ENCODE measurements at regions of chr5 and their contacts with region 1.

Region 1: GRCh38 chr5:59099270-59099994 is 516.6 kb downstream of the RAB3C start:
- DNase-seq: peak; percentile 69
- H3K4me3 Mint-ChIP-seq: peak overlapping the region; percentile 50
- H3K27ac Mint-ChIP-seq: peak overlapping the region; percentile 90
- H3K4me1 Mint-ChIP-seq: peaks cover 82% of the 10 kb centered on the region
- H3K27me3 Mint-ChIP-seq: no peaks in the 10 kb centered on the region

Region 2: DNA sequence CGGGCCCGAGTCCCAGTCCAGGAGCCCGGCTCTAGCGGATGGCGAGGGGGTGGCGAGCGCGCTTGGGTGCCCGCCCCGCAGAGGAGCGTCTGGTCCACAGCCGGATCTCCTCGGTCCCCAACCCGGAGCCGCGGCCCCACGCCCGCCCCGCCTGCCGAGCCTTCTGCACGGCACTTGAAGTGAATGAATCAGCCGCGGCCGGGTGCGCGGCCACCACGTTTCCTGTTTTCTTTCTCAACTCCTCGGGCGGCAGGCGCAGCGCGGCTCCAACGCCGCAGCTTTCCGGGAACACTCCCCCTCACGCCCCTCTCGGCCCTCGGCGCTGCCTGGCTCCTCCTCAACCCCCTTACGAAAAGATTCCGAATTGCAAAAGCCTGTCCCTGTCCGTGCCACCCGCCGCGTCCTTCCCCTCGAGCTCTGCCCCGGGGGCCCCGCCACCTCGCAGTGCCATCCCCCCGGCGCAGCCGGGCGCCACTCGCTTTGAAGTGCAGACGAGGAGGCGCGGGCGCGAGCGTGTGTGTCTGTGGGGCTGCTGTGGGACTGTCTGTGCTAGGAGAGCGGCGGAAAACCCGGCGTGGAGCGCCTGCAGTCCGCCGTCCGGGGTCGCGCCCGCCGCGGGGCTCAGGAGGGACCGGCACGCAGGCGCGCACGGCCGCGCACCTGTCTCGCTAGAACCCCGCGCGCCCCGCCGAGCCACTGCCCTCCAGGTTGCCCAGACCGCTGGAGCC is 60.0 kb before region 1 on chr5:
- intact Hi-C with region 1: loop called (anchors 1 kb)
- DNase-seq: peak; percentile 88
- H3K4me3 Mint-ChIP-seq: peak overlapping the region; percentile 89
- H3K27ac Mint-ChIP-seq: peak overlapping the region; percentile 99
- H3K4me1 Mint-ChIP-seq: peaks cover 56% of the 10 kb centered on the region
- H3K27me3 Mint-ChIP-seq: no peaks in the 10 kb centered on the region

Region 3: GRCh38 chr5:59152701-59153245 is 53.3 kb after region 1 on chr5:
- intact Hi-C with region 1: loop called (anchors 1 kb)
- DNase-seq: peak; percentile 14
- H3K4me3 Mint-ChIP-seq: peak overlapping the region; percentile 58
- H3K27ac Mint-ChIP-seq: no peak overlapping the region
- H3K4me1 Mint-ChIP-seq: no peaks in the 10 kb centered on the region
- H3K27me3 Mint-ChIP-seq: no peaks in the 10 kb centered on the region

Region 4: GRCh38 chr5:59174248-59174844 is 74.9 kb after region 1 on chr5:
- intact Hi-C with region 1: loop called (anchors 1 kb)
- DNase-seq: no peak
- H3K4me3 Mint-ChIP-seq: no peak overlapping the region
- H3K27ac Mint-ChIP-seq: no peak overlapping the region
- H3K4me1 Mint-ChIP-seq: peaks cover 53% of the 10 kb centered on the region
- H3K27me3 Mint-ChIP-seq: no peaks in the 10 kb centered on the region

Region 5: GRCh38 chr5:59608745-59609144 is 509.3 kb after region 1 on chr5:
- intact Hi-C with region 1: loop called (anchors 1 kb)
- DNase-seq: no peak
- H3K4me3 Mint-ChIP-seq: peak overlapping the region; percentile 41
- H3K27ac Mint-ChIP-seq: peak overlapping the region; percentile 77
- H3K4me1 Mint-ChIP-seq: peaks cover 43% of the 10 kb centered on the region
- H3K27me3 Mint-ChIP-seq: no peaks in the 10 kb centered on the region

Measured in activated T-helper 1 cell treated with anti-CD3 and anti-CD28 coated beads, Interleukin-12 subunit alpha, Interleukin-12 subunit beta, Interleukin-2, Interleukin-4 antibody, amounts not matched to agents 30 ng/mL and 10 ng/mL and 1 ng/mL, durations not matched to agents 14 hours and 24 hours and 36 hours (primary cell).